Heart right ventricle (tissue), 16 donors: ENCODE measurements at regions of chr1 and their contacts with region 1.

Region 1: GRCh38 chr1:228174482-228175375 is 9.1 kb downstream of the IBA57 start:
- DNase-seq: no peak
- ATAC-seq: peak in 4 of 8 donors; percentile 13 to 41 (median 24)
- H3K4me3 ChIP-seq: no peak overlapping the region
- H3K27ac ChIP-seq: no peak overlapping the region
- H3K4me1 ChIP-seq: peaks cover 0 to 26% (median 9%) of the 10 kb centered on the region in 9 donors
- H3K27me3 ChIP-seq: no peaks in the 10 kb centered on the region
- CTCF ChIP-seq: no peak

Region 2: DNA sequence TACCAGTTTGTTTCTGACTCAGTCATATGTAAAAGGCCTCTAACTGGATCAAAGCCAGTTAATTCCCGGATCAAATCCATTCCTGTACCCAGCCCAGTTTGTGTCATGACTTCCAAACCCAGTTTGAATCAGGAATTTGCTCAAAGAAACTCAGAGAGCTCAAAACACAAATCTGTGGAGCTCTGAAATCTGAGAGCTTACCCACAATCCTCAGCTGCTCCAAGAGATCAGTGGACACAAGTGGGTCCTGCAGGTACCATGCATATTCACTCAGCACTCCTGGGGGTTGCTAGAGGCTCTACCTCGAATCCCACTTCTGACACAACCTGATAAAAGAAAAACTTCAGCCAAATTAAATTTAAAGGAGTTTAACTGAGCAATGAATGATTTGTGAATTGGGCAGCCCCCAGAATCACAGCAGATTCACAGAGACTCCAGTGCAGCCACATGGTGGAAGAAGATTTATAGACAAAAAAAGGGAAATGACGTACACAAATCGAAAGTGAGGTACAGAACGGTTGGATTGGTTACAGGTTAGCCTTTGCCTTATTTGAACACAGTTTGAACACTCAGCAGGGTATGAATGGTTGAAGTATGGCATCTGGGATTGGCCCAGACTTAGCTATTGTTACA is 53.8 kb before region 1 on chr1:
- intact Hi-C with region 1: loop called in 1 of 10 experiments (anchors 10 kb)
- DNase-seq: no peak
- ATAC-seq: no peak
- H3K4me3 ChIP-seq: no peak overlapping the region
- H3K27ac ChIP-seq: no peak overlapping the region
- H3K4me1 ChIP-seq: no peaks in the 10 kb centered on the region
- H3K27me3 ChIP-seq: peaks cover 0 to under 1% (median 0%) of the 10 kb centered on the region in 7 donors
- CTCF ChIP-seq: no peak

Region 3: DNA sequence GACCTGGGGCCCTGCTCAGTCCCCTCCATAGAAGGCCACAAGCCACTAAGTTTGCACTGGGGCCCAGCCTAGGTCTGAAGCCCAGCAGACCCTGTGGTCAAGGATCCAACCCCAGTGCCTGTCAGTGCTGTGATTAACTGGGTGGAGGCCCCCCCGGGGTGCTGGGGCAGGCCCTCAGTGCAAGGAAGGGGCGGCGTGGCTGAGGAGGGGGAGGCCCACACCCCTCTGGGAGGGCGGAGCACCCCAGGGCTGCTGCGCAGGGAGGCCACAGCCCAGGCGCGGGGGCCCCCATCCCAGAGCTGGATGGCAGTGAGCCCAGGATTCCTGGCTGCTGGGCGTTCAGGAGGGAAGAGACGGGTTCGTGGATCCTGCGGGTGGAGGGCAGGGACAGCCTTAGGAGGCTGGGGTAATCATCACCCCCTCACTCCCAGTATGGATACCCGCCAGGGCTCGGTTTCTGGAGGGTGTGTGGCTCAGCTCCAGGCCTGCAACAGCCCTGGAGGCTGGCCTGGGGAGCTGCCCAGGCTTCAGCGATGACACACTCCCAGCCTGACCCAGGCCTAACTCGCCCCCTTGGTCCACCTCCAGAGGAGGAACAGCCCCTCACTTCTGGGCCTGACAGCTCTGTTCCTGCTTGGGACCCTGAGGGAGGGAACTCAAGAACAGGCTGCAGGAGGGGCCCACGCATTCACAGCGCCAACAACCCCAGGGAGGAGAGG is 24.1 kb before region 1 on chr1:
- intact Hi-C with region 1: no loop called
- DNase-seq: peak; percentile 64 to 70
- ATAC-seq: peak; percentile 60 to 71 (median 64)
- H3K4me3 ChIP-seq: peak overlapping the region in 8 of 10 donors; percentile 21 to 49 (median 44)
- H3K27ac ChIP-seq: peak overlapping the region; percentile 67 to 91 (median 85)
- H3K4me1 ChIP-seq: peaks cover 31 to 65% (median 44%) of the 10 kb centered on the region in 9 donors
- H3K27me3 ChIP-seq: no peaks in the 10 kb centered on the region
- CTCF ChIP-seq: no peak

Region 4: DNA sequence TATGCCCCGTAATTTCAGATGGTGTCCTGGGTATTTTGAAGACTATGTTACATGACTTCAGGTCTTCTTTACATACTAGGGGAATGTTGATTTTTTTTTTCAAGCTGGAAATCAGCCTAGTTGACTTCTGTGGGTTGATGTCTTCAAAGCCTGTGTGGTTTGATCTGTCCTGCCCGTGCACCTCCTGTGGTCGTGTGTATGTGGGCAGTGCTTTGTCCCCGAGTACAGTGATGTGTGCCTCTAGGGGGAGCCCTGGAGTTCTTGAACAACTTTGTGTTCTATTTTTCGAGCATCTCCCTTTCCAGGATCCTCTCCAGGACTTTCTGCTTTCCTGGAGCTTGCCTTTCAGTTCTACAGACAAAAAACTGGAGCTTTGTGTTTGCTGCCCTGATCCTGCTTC is 62.0 kb after region 1 on chr1:
- intact Hi-C with region 1: no loop called
- DNase-seq: peak in 1 of 2 donors; percentile 44
- ATAC-seq: peak in 6 of 8 donors; percentile 38 to 65 (median 50)
- H3K4me3 ChIP-seq: no peak overlapping the region
- H3K27ac ChIP-seq: no peak overlapping the region
- H3K4me1 ChIP-seq: peaks cover 0 to 37% (median 5%) of the 10 kb centered on the region in 9 donors
- H3K27me3 ChIP-seq: no peaks in the 10 kb centered on the region
- CTCF ChIP-seq: peak; percentile 15 to 64 (median 57)